PC-3 (cell line): ENCODE measurements at regions of chr10 and their contacts with region 1.

Region 1: DNA sequence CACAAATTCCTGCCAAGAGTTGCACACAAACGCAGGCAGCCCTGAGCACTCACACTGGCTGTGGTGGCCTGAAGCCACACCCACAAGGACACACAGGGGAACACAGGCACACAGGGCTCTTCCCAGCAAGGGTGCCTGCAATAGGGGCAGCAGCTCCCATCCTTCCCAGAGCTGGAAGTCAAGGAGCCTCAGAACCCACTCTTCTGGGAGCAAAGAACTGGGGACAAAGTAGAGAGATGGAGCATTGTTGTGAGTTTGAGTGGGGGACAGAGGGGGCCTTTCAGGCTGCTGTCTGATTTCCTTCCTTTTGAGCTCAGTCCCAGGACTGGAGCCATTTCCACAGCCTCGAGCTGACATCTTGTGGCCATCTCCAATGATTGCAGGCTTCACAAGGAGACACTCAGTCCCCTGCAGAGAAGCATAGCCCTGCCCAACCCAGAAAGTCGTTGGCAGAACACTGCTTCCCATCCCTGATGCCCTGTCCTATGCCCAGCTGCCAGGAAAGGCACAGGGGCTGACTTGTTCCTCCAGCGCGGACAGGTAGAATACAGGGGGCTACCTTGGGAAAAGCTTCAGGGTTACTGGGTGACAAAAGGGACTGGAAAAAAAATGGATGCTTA is 34.4 kb upstream of the SLF2 start:
- DNase-seq: peak; percentile 71
- ATAC-seq: peak; percentile 96
- H3K4me3 ChIP-seq: no peak overlapping the region
- H3K27ac ChIP-seq: no peak overlapping the region
- H3K4me1 ChIP-seq: no peaks in the 10 kb centered on the region
- H3K27me3 ChIP-seq: no peaks in the 10 kb centered on the region
- CTCF ChIP-seq: peak; percentile 73

Region 2: DNA sequence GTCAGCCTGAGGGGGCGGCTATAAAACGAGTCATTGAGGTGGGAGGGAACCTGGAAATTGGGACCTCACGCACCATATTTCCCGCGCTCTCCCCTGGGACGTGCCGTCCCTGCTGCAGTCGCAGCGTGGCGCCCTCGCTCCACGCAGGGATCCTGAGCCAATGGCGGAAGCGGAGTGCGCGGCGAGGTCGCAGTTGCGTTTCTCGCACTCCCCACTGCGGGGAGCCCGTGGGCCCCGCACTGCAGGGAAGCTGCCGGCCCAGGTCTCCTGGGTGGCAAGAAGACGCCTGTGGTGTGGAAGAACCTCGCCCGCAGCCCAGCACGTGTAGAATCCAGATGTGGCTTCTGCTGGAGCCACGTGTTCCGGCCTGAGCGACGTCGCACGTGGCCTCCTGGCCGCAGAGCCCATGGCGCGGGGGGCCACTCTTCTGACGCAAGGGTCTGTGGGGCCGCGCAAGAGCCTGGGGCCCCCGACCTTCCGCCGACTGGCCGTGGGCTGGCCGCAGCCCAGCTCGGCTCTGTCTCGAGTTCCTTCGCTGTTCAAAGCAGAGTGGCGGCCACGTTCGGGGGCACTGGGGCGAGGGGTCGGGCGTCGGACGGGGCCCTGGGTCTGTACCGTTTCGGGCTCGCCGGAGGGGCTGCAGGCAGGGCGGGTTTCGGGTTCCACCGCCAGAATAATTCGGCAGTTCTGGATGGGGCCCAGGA is 316.2 kb before region 1 on chr10:
- CTCF ChIA-PET with region 1: interaction called, 4 read pairs
- POLR2A ChIA-PET with region 1: no interaction called
- intact Hi-C with region 1: loop called (anchors 10 kb)
- DNase-seq: peak; percentile 21
- ATAC-seq: peak; percentile 42
- H3K4me3 ChIP-seq: no peak overlapping the region
- H3K27ac ChIP-seq: no peak overlapping the region
- H3K4me1 ChIP-seq: no peaks in the 10 kb centered on the region
- H3K27me3 ChIP-seq: no peaks in the 10 kb centered on the region
- CTCF ChIP-seq: peak; percentile 50

Region 3: DNA sequence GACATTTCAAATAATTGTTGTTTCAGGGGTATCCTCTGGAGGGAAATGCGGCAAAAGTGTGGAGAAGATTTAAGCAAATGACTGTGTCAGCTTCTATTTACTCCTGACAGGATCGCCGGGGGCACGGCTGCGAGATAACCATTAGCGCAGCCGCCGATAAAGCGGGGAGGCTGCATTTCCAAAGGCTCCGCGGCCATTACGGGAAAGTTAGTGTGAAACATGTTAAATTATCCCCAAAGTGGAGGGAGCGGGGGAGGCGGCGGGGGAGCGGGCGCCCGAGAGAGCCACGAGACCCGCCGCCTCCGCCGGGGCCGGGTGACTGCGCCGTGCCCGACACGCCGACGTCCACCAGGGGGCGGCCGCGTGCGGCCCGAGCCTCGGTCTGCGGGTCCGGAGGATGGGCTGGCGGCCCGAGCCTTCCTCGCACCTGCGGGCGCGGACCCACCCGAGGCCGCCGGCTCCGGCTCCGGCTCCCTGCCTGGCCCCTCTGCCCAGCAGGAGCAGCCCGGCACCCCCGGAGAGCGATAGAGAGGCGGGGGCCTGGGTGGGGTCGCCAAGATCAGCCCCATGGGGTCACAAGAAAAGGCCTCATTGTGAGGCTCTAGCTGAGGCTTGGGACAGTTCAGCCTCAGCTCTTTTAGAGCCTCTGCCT is 207.4 kb before region 1 on chr10:
- CTCF ChIA-PET with region 1: interaction called, 8 read pairs
- POLR2A ChIA-PET with region 1: no interaction called
- intact Hi-C with region 1: loop called (anchors 1 kb)
- DNase-seq: peak; percentile 41
- ATAC-seq: peak; percentile 76
- H3K4me3 ChIP-seq: peak overlapping the region; percentile 52
- H3K27ac ChIP-seq: no peak overlapping the region
- H3K4me1 ChIP-seq: no peaks in the 10 kb centered on the region
- H3K27me3 ChIP-seq: peaks cover 34% of the 10 kb centered on the region
- CTCF ChIP-seq: peak; percentile 69

Region 4: GRCh38 chr10:100743626-100744135 is 134.7 kb before region 1 on chr10:
- CTCF ChIA-PET with region 1: no interaction called
- POLR2A ChIA-PET with region 1: no interaction called
- intact Hi-C with region 1: loop called (anchors 10 kb)
- DNase-seq: peak; percentile 50
- ATAC-seq: peak; percentile 57
- H3K4me3 ChIP-seq: peak overlapping the region; percentile 33; the same call in 1 of the 2 replicates
- H3K27ac ChIP-seq: no peak overlapping the region
- H3K4me1 ChIP-seq: no peaks in the 10 kb centered on the region
- H3K27me3 ChIP-seq: peaks cover 97% of the 10 kb centered on the region
- CTCF ChIP-seq: peak; percentile 68